H1 (cell line): ENCODE measurements at regions of chr12 and their contacts with region 1.

Region 1: DNA sequence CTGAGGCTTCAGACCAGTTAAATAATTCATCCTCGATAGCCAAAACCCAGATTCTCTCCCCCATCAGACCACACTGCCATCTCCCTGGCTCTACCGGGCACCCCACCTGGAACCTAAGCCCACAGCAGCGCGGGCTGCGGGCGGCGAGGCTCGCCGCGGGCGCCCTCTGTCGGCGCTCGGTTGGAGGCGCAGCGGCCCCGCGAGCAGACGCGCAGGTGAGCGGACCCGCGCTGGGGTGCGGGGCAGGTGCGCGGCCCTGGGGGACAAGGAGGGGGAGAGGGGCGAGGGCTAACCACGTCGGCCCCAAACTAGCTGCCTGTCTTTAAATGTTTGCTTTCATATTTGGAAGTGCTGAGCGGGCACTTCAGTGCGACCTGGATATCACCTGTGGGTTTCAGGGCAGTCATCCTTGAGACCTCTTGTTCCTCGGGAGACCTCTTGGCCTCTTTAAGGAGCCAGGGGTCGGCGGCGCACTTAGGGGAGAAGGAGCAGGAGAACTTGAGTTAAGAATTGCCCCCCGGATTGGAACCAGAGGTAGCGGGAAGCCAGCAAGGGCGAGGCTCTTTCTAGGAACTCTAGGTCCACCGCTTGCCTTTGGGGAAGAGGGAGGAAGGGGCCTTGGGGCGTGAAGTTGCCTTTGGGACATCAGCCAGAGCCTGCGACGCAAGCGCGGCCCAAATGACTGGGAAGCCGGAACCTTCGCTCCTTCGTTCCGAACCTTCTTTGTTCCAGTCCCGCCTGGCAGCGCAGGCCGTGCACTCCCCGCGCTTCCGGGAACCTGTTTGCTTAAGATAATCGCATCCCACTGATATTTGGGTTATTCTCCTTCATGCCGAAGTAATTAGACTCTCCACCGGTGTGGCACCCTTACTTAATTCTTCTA is 78.7 kb downstream of the NEDD1 start:
- DNase-seq: peak in 1 of 2 experiments; percentile 82
- H3K4me3 ChIP-seq: peak overlapping the region; percentile 44 to 66 (median 51)
- H3K27ac ChIP-seq: no peak overlapping the region
- H3K4me1 ChIP-seq: peaks cover 0 to 14% (median 5%) of the 10 kb centered on the region in 4 experiments; a peak in 4 of 7 replicates
- H3K27me3 ChIP-seq: peaks cover 0 to 3% (median 2%) of the 10 kb centered on the region in 4 experiments; a peak in 3 of 7 replicates
- CTCF ChIP-seq: peak; percentile 83 to 97 (median 83)
- EP300 ChIP-seq: peak in 1 of 2 experiments; percentile 48; a peak in 1 of 3 replicates
- POLR2A ChIP-seq: no peak
- RAD21 ChIP-seq: peak; percentile 81 to 92

Region 2: GRCh38 chr12:96578526-96579125 is 407.1 kb before region 1 on chr12:
- CTCF ChIA-PET with region 1: interaction called, 29 read pairs
- POLR2A ChIA-PET with region 1: no interaction called
- DNase-seq: no peak
- H3K4me3 ChIP-seq: no peak overlapping the region
- H3K27ac ChIP-seq: no peak overlapping the region
- H3K4me1 ChIP-seq: peaks cover 0 to 2% (median 0%) of the 10 kb centered on the region in 4 experiments; a peak in 1 of 7 replicates
- H3K27me3 ChIP-seq: no peaks in the 10 kb centered on the region
- CTCF ChIP-seq: peak in 2 of 3 experiments; percentile 51 to 56; a peak in 2 of 4 replicates
- EP300 ChIP-seq: no peak
- POLR2A ChIP-seq: no peak
- RAD21 ChIP-seq: peak; percentile 86

Region 3: GRCh38 chr12:96828169-96828789 is 157.4 kb before region 1 on chr12:
- CTCF ChIA-PET with region 1: no interaction called
- POLR2A ChIA-PET with region 1: no interaction called
- DNase-seq: no peak
- H3K4me3 ChIP-seq: no peak overlapping the region
- H3K27ac ChIP-seq: no peak overlapping the region
- H3K4me1 ChIP-seq: no peaks in the 10 kb centered on the region
- H3K27me3 ChIP-seq: no peaks in the 10 kb centered on the region
- CTCF ChIP-seq: peak in 2 of 3 experiments; percentile 22 to 23; a peak in 2 of 4 replicates
- EP300 ChIP-seq: no peak
- POLR2A ChIP-seq: no peak
- RAD21 ChIP-seq: no peak; a peak in 1 of 4 replicates

Region 4: DNA sequence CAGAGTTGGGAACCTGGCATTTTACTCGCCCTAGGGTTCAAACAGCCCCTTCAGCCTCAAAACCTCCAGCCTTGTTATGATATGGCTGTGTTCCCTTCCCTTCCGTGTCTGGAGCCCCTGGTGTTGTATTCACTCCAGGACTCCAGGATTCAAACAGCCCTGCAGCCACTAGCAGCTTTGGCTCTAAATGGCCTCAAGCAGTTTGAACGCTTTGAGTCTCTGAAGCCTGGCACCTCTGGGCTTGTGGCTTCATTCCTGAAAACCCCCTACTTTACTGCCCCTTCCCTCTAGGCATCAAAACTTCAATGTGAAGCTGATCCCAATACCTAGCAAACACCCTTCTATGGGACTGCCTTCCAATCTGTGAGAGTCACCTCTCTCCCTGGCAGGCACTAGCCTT is 408.9 kb after region 1 on chr12:
- CTCF ChIA-PET with region 1: interaction called, 12 read pairs
- POLR2A ChIA-PET with region 1: no interaction called
- DNase-seq: no peak
- H3K4me3 ChIP-seq: no peak overlapping the region
- H3K27ac ChIP-seq: no peak overlapping the region
- H3K4me1 ChIP-seq: peaks cover 0 to 18% (median 4%) of the 10 kb centered on the region in 4 experiments; a peak in 3 of 7 replicates
- H3K27me3 ChIP-seq: peaks cover 0 to 1% (median 0%) of the 10 kb centered on the region in 4 experiments; a peak in 1 of 7 replicates
- CTCF ChIP-seq: no peak
- EP300 ChIP-seq: no peak
- POLR2A ChIP-seq: no peak
- RAD21 ChIP-seq: no peak